Gastrocnemius medialis (tissue), 4 donors: ENCODE measurements at regions of chr15 and their contacts with region 1.

Region 1: GRCh38 chr15:31279221-31280045 is 47.2 kb upstream of the KLF13 start:
- DNase-seq: peak in 1 of 2 donors; percentile 11
- ATAC-seq: peak in 1 of 2 donors; percentile 16
- H3K4me3 ChIP-seq: no peak overlapping the region
- H3K27ac ChIP-seq: no peak overlapping the region
- H3K4me1 ChIP-seq: peaks cover 0 to 5% of the 10 kb centered on the region in 2 donors
- H3K27me3 ChIP-seq: no peaks in the 10 kb centered on the region
- CTCF ChIP-seq: no peak
- POLR2A ChIP-seq: no peak

Region 2: DNA sequence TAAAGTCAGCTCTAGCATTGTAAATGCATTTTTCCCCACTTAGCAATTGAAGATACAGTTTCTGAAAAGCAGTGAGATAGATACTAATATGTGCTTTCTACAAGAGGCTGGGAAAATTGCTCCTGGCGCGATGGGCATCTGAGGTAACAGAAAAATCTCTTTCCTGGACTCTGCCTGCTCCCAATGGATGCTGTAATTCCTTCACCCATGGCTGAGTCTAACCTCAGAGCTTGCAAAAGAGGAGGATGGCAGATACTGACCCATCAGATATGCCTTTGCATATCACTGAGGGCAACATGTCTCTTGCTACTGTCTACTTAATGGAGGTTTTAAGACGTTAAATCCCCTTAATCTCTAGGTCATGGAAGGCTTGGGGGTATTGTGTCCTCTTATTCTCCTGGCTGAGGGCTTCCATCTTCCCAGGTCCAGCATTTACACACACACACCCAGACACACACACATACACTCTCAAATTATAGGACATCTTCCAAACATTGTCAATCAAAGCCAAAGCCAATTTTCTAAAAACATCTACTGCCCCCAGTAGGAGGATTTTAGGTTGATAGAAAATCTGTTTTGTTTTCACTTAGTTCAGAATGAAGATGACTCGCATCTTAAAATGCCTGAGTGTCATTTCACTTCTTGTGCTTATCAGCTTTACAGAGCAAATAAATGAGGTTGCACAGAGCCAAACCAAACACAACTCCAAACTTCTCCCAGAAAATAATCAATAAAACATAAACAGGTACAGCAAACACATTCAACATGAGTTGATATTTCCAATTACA is 180.3 kb before region 1 on chr15:
- in situ Hi-C with region 1: no loop called
- intact Hi-C with region 1: no loop called
- DNase-seq: no peak
- ATAC-seq: no peak
- H3K4me3 ChIP-seq: no peak overlapping the region
- H3K27ac ChIP-seq: no peak overlapping the region
- H3K4me1 ChIP-seq: no peaks in the 10 kb centered on the region
- H3K27me3 ChIP-seq: no peaks in the 10 kb centered on the region
- CTCF ChIP-seq: no peak
- POLR2A ChIP-seq: no peak

Region 3: DNA sequence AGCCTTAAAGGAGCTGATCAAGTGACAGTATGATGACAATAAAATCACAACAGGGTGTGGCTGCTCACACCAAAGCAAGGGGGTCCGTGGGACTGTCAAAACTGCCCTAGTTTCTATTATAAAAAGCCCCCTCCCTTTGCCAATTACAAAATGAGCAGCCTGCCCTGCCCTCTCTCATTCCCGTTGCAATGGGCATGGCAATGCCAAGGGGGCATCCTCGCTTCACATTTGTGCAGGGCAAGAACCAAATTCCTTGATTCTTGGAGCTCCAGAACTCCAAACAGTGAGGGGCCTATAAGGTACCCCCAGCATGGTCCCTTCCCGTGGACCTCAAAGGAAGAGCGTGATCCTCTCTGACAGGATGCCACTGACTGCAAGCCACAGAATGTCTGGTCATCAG is 73.0 kb before region 1 on chr15:
- in situ Hi-C with region 1: no loop called
- intact Hi-C with region 1: loop called (anchors 5 kb)
- DNase-seq: no peak
- ATAC-seq: no peak
- H3K4me3 ChIP-seq: no peak overlapping the region
- H3K27ac ChIP-seq: no peak overlapping the region
- H3K4me1 ChIP-seq: no peaks in the 10 kb centered on the region
- H3K27me3 ChIP-seq: no peaks in the 10 kb centered on the region
- CTCF ChIP-seq: no peak
- POLR2A ChIP-seq: no peak

Region 4: GRCh38 chr15:31265871-31266711 is 13.3 kb before region 1 on chr15:
- in situ Hi-C with region 1: no loop called
- intact Hi-C with region 1: no loop called
- DNase-seq: no peak
- ATAC-seq: no peak
- H3K4me3 ChIP-seq: no peak overlapping the region
- H3K27ac ChIP-seq: peak overlapping the region in 1 of 4 donors; percentile 10
- H3K4me1 ChIP-seq: peaks cover 15 to 26% of the 10 kb centered on the region in 2 donors
- H3K27me3 ChIP-seq: no peaks in the 10 kb centered on the region
- CTCF ChIP-seq: no peak
- POLR2A ChIP-seq: no peak